PC-9 (cell line): ENCODE measurements at regions of chr2 and their contacts with region 1.

Region 1: GRCh38 chr2:241558532-241559322 is at the start of gene BOK:
- DNase-seq: peak; percentile 59 to 88
- H3K4me3 ChIP-seq: peak within 1 kb of the TSS; percentile 79
- H3K27ac ChIP-seq: no peak within 1 kb of the TSS
- H3K4me1 ChIP-seq: peaks cover 23% of the 10 kb centered on the region
- H3K27me3 ChIP-seq: no peaks in the 10 kb centered on the region
- CTCF ChIP-seq: no peak
- total RNA-seq, gene BOK: 72.8 and 107 TPM in 2 replicates

Region 2: GRCh38 chr2:240796543-240797499 is 761.9 kb before region 1 on chr2:
- CTCF ChIA-PET with region 1: no interaction called
- POLR2A ChIA-PET with region 1: no interaction called
- intact Hi-C with region 1: no loop called
- DNase-seq: no peak
- H3K4me3 ChIP-seq: no peak overlapping the region
- H3K27ac ChIP-seq: no peak overlapping the region
- H3K4me1 ChIP-seq: no peaks in the 10 kb centered on the region
- H3K27me3 ChIP-seq: peaks cover 100% of the 10 kb centered on the region
- CTCF ChIP-seq: no peak

Region 3: GRCh38 chr2:241534701-241535375 is 23.9 kb before region 1 on chr2:
- CTCF ChIA-PET with region 1: no interaction called
- POLR2A ChIA-PET with region 1: no interaction called
- intact Hi-C with region 1: no loop called
- DNase-seq: no peak
- H3K4me3 ChIP-seq: no peak overlapping the region
- H3K27ac ChIP-seq: no peak overlapping the region
- H3K4me1 ChIP-seq: no peaks in the 10 kb centered on the region
- H3K27me3 ChIP-seq: peaks cover 24% of the 10 kb centered on the region
- CTCF ChIP-seq: no peak

Region 4: GRCh38 chr2:241598480-241598879 is 39.8 kb after region 1 on chr2:
- CTCF ChIA-PET with region 1: interaction called, 5 read pairs
- POLR2A ChIA-PET with region 1: no interaction called
- intact Hi-C with region 1: loop called (anchors 5 kb)
- DNase-seq: peak; percentile 48 to 64
- H3K4me3 ChIP-seq: no peak overlapping the region
- H3K27ac ChIP-seq: no peak overlapping the region
- H3K4me1 ChIP-seq: no peaks in the 10 kb centered on the region
- H3K27me3 ChIP-seq: no peaks in the 10 kb centered on the region
- CTCF ChIP-seq: peak; percentile 61; the same call in 1 of the 2 replicates

Region 5: GRCh38 chr2:241620419-241620769 is 61.7 kb after region 1 on chr2:
- CTCF ChIA-PET with region 1: no interaction called
- POLR2A ChIA-PET with region 1: interaction called, 12 read pairs
- intact Hi-C with region 1: no loop called
- DNase-seq: peak in 1 of 2 experiments; percentile 43
- H3K4me3 ChIP-seq: no peak overlapping the region
- H3K27ac ChIP-seq: peak overlapping the region; percentile 37; the same call in 1 of the 2 replicates
- H3K4me1 ChIP-seq: no peaks in the 10 kb centered on the region
- H3K27me3 ChIP-seq: no peaks in the 10 kb centered on the region
- CTCF ChIP-seq: no peak

Region 6: DNA sequence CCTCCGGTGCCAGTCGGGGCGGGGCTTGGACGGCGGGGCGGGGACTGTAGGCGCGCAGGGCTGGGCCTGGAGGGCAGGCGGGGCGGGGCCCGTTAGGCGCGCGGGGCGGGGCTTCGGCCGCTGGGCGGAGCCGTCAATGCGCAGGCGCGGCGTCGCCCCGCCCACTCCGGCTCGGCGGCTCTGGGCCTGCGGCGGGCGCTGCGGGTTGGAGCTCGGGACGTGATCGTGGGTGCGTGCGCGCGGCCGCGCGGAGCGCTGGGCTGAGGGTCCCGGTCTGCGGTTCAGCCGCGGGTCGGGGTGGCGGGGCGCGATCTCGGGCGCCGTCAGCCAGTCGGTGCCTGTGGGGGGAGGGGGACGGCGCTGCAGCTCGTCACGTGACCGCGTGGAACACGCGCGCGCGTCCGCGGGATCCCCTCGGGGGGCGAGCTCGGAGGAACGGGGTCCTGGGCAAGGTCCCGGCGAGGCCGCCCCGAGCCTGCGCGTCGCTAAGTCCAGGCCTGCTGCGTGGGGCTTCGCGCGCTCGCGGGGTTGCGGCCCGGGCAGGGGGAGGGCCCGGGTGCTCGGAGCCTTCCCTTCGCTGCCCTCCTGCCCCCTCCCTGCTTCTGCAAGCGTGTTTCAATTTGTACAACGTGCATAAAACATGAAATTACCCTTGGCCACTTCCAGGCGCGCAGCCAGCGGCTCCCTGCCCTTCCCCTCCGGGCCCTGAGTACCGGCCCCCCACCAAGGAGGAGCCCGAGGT is 175.9 kb after region 1 on chr2 and contains the start of gene D2HGDH:
- CTCF ChIA-PET with region 1: no interaction called
- POLR2A ChIA-PET with region 1: interaction called, 11 read pairs
- intact Hi-C with region 1: no loop called
- DNase-seq: peak; percentile 65 to 98
- H3K4me3 ChIP-seq: peak within 1 kb of the TSS; percentile 85
- H3K27ac ChIP-seq: peak within 1 kb of the TSS; percentile 36
- H3K4me1 ChIP-seq: peaks cover 16% of the 10 kb centered on the region
- H3K27me3 ChIP-seq: no peaks in the 10 kb centered on the region
- CTCF ChIP-seq: no peak
- total RNA-seq, gene D2HGDH: 131 and 232 TPM in 2 replicates

Region 7: GRCh38 chr2:241877989-241878970 is 319.6 kb after region 1 on chr2:
- CTCF ChIA-PET with region 1: no interaction called
- POLR2A ChIA-PET with region 1: no interaction called
- intact Hi-C with region 1: loop called (anchors 5 kb)
- DNase-seq: peak in 1 of 2 experiments; percentile 88
- H3K4me3 ChIP-seq: no peak overlapping the region
- H3K27ac ChIP-seq: no peak overlapping the region
- H3K4me1 ChIP-seq: peaks cover 5% of the 10 kb centered on the region
- H3K27me3 ChIP-seq: no peaks in the 10 kb centered on the region
- CTCF ChIP-seq: peak; percentile 79